IMR-90 (cell line): ENCODE measurements at regions of chr3 and their contacts with region 1.

Region 1: GRCh38 chr3:129650256-129650872 is 43.9 kb upstream of the PLXND1 start:
- DNase-seq: peak; percentile 84
- ATAC-seq: peak; percentile 75; the same call in 1 of the 2 replicates
- H3K4me3 ChIP-seq: no peak overlapping the region
- H3K27ac ChIP-seq: no peak overlapping the region
- H3K4me1 ChIP-seq: peaks cover 17% of the 10 kb centered on the region
- H3K27me3 ChIP-seq: no peaks in the 10 kb centered on the region
- CTCF ChIP-seq: peak; percentile 91
- POLR2A ChIP-seq: no peak
- RAD21 ChIP-seq: peak; percentile 87

Region 2: DNA sequence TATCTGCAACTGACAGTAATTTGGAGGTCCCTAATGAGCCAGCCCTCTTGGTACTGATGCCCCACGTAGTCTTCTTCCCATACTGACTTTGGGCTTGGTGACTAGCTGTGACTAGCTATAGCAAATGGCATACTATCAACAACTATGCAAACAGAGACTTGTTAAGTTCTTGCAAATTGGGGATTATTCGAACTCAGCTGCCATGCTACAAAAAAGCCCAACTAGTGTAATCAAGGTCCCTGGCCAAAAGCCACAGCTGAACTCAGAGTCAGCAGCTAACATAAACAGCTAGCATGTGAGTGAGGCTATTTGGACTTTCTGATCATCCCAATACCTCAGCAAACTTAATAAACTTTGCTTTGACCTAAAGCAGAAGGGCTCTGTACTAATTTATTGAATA is 77.3 kb after region 1 on chr3:
- CTCF ChIA-PET with region 1: no interaction called
- POLR2A ChIA-PET with region 1: no interaction called
- dilution Hi-C with region 1: no loop called
- in situ Hi-C with region 1: no loop called
- intact Hi-C with region 1: loop called (anchors 5 kb)
- DNase-seq: peak; percentile 80
- ATAC-seq: peak; percentile 52
- H3K4me3 ChIP-seq: no peak overlapping the region
- H3K27ac ChIP-seq: peak overlapping the region; percentile 72; the same call in 1 of the 2 replicates
- H3K4me1 ChIP-seq: peaks cover 10% of the 10 kb centered on the region
- H3K27me3 ChIP-seq: no peaks in the 10 kb centered on the region
- CTCF ChIP-seq: no peak
- POLR2A ChIP-seq: no peak
- RAD21 ChIP-seq: no peak

Region 3: DNA sequence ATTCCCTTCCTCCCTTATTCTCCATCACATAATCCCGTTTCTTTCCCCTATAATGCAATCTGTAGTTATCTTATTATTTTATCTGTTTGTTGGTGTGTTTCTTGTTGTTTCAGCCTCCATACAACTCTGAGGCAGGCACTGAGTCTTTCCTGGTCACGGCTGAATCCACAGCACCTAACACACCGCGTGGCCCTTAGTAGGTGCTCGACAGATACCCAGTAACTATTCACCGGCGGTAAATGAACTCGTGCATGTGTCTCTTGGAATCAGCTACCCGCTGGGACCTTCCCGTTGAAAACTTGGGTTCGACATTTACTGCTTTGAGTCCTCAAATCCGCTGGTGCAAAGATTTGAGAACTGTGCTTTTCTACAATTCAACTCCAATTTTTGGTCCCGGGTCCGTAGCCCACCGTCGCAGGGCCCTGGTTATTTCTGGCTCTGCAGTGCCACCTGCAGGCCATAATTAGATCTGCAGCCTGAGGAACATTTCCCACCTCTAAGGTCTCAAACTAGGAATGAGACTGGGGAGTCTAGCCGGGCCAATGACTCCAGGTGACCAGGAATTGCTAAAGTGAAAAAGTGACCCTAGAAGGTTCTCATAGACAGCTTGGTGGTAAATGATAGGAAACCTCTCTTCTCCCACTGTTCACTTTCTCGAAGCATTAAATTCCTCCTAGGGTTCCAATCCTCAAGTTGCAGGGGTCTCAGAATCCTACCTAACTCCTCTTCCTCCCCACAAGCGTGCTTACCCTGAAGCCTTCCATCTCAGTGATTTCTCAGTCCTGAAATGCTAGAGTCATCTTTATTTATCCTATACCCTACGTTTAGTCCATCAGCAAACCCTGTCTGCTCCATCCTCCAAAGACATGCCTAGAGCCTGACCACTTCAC is 284.1 kb after region 1 on chr3:
- CTCF ChIA-PET with region 1: no interaction called
- POLR2A ChIA-PET with region 1: no interaction called
- dilution Hi-C with region 1: no loop called
- in situ Hi-C with region 1: loop called (anchors 10 kb)
- intact Hi-C with region 1: loop called (anchors 1 kb)
- DNase-seq: peak; percentile 16
- ATAC-seq: peak; percentile 89
- H3K4me3 ChIP-seq: no peak overlapping the region; the same call in 1 of the 2 replicates
- H3K27ac ChIP-seq: no peak overlapping the region
- H3K4me1 ChIP-seq: 0 out of 2 replicates have a peak, but pooled peaks cover 2% of the 10 kb centered on the region
- H3K27me3 ChIP-seq: peaks cover 21% of the 10 kb centered on the region
- CTCF ChIP-seq: peak; percentile 83
- POLR2A ChIP-seq: no peak
- RAD21 ChIP-seq: peak; percentile 77